ENCODE measurements at regions of chr21 and their contacts with region 1.

Region 1: GRCh38 chr21:43810505-43811261 is 21.3 kb downstream of the RRP1 start:
- DNase-seq: peak; percentile 94
- ATAC-seq: peak; percentile 94
- H3K4me3 Mint-ChIP-seq: no peak overlapping the region
- H3K27ac Mint-ChIP-seq: peak overlapping the region; percentile 24
- H3K4me1 Mint-ChIP-seq: peaks cover 8% of the 10 kb centered on the region
- H3K27me3 Mint-ChIP-seq: no peaks in the 10 kb centered on the region

Region 2: GRCh38 chr21:43938751-43939442 is 128.2 kb after region 1 on chr21:
- CTCF ChIA-PET with region 1: interaction called, 38 read pairs
- DNase-seq: peak; percentile 92
- ATAC-seq: peak; percentile 99
- H3K4me3 Mint-ChIP-seq: peak overlapping the region; percentile 77
- H3K27ac Mint-ChIP-seq: peak overlapping the region; percentile 56
- H3K4me1 Mint-ChIP-seq: peaks cover 15% of the 10 kb centered on the region
- H3K27me3 Mint-ChIP-seq: no peaks in the 10 kb centered on the region